Activated T-helper 1 cell treated with anti-CD3 and anti-CD28 coated beads, Interleukin-12 subunit alpha, Interleukin-12 subunit beta, Interleukin-2, Interleukin-4 antibody, amounts not matched to agents 30 ng/mL and 10 ng/mL and 1 ng/mL, durations not matched to agents 14 hours and 24 hours and 36 hours (primary cell): ENCODE measurements at regions of chr1 and their contacts with region 1.

Region 1: DNA sequence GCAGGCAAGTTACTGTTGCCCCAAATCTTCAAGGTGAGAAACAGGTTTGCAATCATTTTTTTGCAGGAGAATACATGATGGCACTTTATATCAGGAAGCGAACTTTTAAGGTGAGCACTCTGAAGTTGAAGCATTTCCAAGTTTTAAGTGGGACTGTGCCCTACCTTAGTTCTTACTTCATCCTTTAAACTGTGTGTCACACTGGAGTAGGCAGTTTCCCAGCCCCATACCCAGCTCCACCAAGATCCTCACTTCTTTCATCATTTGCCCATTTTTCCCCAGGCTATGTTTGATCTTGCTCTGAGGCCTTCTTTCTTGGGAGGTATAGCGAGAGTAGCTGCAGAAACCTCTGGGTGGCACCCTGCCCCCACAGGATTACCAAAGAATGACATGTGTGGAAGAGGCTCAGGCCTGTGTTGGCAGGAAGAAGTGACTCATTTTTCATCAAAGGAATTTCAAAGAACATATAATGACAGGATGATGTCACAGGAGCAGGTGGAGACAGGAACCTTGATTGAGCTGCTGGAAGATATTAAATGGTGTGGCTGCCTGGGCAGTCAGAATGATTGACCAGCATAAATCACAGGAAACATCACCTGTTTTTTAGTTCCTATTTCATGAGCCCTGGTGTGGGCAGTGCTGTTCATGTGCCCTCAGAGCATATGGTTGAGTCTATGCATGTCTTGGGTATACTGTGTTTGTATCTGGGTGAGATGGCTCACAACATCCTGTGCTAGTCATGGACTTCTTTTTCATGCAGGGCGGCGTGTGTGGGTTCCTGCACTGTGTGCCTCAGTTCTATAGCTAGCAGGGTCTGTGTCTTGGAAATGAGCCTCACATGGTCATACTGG is 20.8 kb upstream of the MACF1 start:
- DNase-seq: peak; percentile 78
- H3K4me3 Mint-ChIP-seq: peak overlapping the region; percentile 57
- H3K27ac Mint-ChIP-seq: peak overlapping the region; percentile 97
- H3K4me1 Mint-ChIP-seq: peaks cover 53% of the 10 kb centered on the region
- H3K27me3 Mint-ChIP-seq: no peaks in the 10 kb centered on the region

Region 2: GRCh38 chr1:39098546-39099250 is 85.0 kb before region 1 on chr1:
- intact Hi-C with region 1: loop called (anchors 2 kb)
- DNase-seq: peak; percentile 53
- H3K4me3 Mint-ChIP-seq: no peak overlapping the region
- H3K27ac Mint-ChIP-seq: peak overlapping the region; percentile 40
- H3K4me1 Mint-ChIP-seq: peaks cover 30% of the 10 kb centered on the region
- H3K27me3 Mint-ChIP-seq: peaks cover under 1% of the 10 kb centered on the region

Region 3: GRCh38 chr1:39115271-39116110 is 68.2 kb before region 1 on chr1:
- intact Hi-C with region 1: loop called (anchors 1 kb)
- DNase-seq: no peak
- H3K4me3 Mint-ChIP-seq: no peak overlapping the region
- H3K27ac Mint-ChIP-seq: no peak overlapping the region
- H3K4me1 Mint-ChIP-seq: peaks cover 5% of the 10 kb centered on the region
- H3K27me3 Mint-ChIP-seq: peaks cover 7% of the 10 kb centered on the region

Region 4: DNA sequence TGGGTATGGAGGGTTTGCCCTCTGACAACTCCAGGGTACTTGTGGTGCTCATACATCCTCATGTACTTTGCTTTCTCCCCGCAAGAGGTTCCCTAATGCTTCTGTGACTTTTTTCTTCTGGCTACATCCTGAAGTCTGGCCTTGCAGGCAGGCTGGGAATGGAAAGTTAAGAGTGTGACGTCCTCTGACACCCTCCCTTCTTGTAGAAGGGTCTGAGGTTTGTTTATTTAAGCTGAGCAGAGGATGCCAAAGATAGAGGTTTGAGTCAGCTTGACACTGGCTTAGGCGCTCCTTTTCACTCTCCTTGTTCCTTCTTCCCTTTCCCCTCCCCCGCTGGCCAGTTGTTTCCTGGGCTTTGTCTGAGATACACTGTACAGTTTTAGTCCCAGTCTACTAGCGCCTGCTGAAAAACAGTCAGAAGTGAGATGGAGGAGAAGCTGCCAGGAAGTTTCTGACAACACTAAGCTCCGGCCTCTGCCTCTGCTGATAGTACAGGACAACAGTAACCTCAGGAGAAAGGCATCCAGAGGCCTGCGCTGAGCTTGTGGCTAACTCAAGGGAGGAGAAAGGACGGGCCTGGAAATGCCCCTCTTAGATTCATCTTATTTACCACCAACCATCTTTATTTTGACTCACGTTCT is 20.8 kb after region 1 on chr1 and contains the start of gene MACF1:
- intact Hi-C with region 1: loop called (anchors 1 kb)
- DNase-seq: peak; percentile 34
- H3K4me3 Mint-ChIP-seq: peak within 1 kb of the TSS; percentile 94
- H3K27ac Mint-ChIP-seq: peak within 1 kb of the TSS; percentile 98
- H3K4me1 Mint-ChIP-seq: peaks cover 50% of the 10 kb centered on the region
- H3K27me3 Mint-ChIP-seq: no peaks in the 10 kb centered on the region
- total RNA-seq, gene MACF1: 224 and 226 TPM in 2 replicates

Region 5: DNA sequence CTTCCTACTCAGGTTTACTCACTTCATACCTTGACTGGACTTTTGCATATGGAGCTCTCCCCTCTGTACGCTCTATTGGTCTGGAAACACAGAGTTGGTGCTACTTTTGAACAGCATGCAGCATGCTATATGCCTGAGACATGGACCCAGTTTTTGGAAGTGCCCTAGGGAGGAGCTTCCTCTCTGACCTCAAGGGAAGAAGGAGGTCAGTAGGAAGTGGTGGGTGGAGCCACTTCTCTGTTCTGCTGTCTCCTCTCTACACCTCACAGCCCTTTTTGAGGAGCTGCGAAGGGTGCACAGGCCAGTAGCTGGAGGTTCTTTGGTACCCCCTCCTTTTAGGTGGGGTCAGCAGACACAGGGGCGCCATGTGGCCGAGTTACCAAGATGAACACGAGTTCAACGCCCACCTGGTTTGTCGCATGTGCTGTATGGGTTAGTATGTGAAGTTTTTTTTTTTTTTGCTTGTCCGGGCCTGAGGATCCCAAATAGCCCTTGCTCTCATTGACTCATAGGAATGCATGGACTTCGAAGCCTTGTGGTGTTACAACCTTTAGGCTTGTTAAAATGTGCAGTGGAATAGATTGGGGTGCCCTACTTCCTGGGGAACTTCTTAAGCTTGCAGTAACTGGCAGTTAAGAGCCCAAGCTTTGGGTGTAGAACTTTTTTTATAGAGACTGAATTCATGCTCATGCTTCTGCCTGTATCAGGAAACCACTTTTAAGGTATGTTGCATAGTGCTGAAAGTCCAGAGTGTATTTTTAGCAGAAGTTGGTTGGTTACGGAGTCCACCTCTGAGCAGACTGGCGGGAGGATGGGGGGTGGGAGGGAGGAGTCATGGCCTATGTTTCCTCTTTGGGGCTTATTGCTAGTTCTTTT is 31.5 kb after region 1 on chr1:
- intact Hi-C with region 1: loop called (anchors 5 kb)
- DNase-seq: peak; percentile 30
- H3K4me3 Mint-ChIP-seq: peak overlapping the region; percentile 86
- H3K27ac Mint-ChIP-seq: peak overlapping the region; percentile 91
- H3K4me1 Mint-ChIP-seq: peaks cover 58% of the 10 kb centered on the region
- H3K27me3 Mint-ChIP-seq: no peaks in the 10 kb centered on the region

Region 6: DNA sequence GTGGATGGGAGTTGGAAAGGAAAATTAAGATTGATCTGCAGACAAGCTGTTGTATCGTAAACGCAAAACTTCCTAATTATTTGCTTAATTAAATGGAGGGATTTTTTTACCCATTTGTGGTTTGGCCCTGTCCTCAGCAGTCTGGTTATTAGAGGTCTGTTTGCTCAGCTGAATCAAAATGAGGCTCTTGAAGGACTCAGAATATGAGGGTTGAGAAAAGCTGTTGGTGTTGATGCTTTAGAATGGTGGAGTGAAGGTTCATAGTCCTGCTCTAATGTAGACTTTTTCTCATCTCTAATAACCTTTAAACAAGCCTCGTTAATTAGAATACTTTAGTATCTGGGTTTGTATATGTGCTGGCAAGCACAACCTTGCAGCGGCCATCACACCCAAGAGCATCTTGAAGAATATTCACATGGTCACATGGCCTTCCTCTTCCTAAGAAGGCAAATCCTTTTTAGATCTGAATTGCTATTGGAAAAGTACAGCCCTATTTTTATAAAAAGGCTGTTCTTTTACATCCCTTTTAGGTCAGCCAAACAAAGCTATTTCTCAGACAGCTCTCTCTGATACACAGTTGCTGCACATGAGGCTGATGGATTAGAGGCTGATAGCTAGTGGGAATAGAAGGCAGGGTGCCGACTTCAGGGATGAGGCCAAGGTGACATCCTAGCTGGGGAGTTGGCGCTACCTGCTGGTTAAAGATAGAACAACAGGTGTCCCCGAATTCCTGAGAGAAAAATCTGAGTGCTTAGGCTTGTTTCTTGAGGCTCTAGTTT is 74.6 kb after region 1 on chr1:
- intact Hi-C with region 1: loop called (anchors 1 kb)
- DNase-seq: peak; percentile 33
- H3K4me3 Mint-ChIP-seq: no peak overlapping the region
- H3K27ac Mint-ChIP-seq: peak overlapping the region; percentile 46
- H3K4me1 Mint-ChIP-seq: peaks cover 32% of the 10 kb centered on the region
- H3K27me3 Mint-ChIP-seq: no peaks in the 10 kb centered on the region